Panc1 (cell line): ENCODE measurements at regions of chr12 and their contacts with region 1.

Region 1: GRCh38 chr12:121483949-121484348 is 84.0 kb downstream of the RNF34 start:
- DNase-seq: no peak
- ATAC-seq: no peak
- H3K4me3 ChIP-seq: no peak overlapping the region
- H3K27ac ChIP-seq: no peak overlapping the region
- H3K4me1 ChIP-seq: no peaks in the 10 kb centered on the region
- H3K27me3 ChIP-seq: no peaks in the 10 kb centered on the region
- CTCF ChIP-seq: no peak

Region 2: GRCh38 chr12:121170611-121171260 is 313.2 kb before region 1 on chr12:
- CTCF ChIA-PET with region 1: no interaction called
- POLR2A ChIA-PET with region 1: no interaction called
- in situ Hi-C with region 1: no loop called
- intact Hi-C with region 1: no loop called
- DNase-seq: no peak
- ATAC-seq: no peak
- H3K4me3 ChIP-seq: no peak overlapping the region
- H3K27ac ChIP-seq: no peak overlapping the region
- H3K4me1 ChIP-seq: no peaks in the 10 kb centered on the region
- H3K27me3 ChIP-seq: no peaks in the 10 kb centered on the region
- CTCF ChIP-seq: no peak

Region 3: GRCh38 chr12:121467115-121467793 is 16.7 kb before region 1 on chr12:
- CTCF ChIA-PET with region 1: interaction called, 16 read pairs
- POLR2A ChIA-PET with region 1: no interaction called
- in situ Hi-C with region 1: no loop called
- intact Hi-C with region 1: no loop called
- DNase-seq: no peak
- ATAC-seq: peak; percentile 98
- H3K4me3 ChIP-seq: peak overlapping the region; percentile 53 to 58
- H3K27ac ChIP-seq: no peak overlapping the region
- H3K4me1 ChIP-seq: peaks cover 7% of the 10 kb centered on the region
- H3K27me3 ChIP-seq: no peaks in the 10 kb centered on the region
- CTCF ChIP-seq: no peak

Region 4: GRCh38 chr12:121595520-121595919 is 111.6 kb after region 1 on chr12:
- CTCF ChIA-PET with region 1: interaction called, 10 read pairs
- POLR2A ChIA-PET with region 1: no interaction called
- in situ Hi-C with region 1: no loop called
- intact Hi-C with region 1: no loop called
- DNase-seq: no peak
- ATAC-seq: no peak
- H3K4me3 ChIP-seq: no peak overlapping the region
- H3K27ac ChIP-seq: no peak overlapping the region
- H3K4me1 ChIP-seq: 0 out of 2 replicates have a peak, but pooled peaks cover under 1% of the 10 kb centered on the region
- H3K27me3 ChIP-seq: no peaks in the 10 kb centered on the region
- CTCF ChIP-seq: no peak